HepG2 (cell line): ENCODE measurements at regions of chr12 and their contacts with region 1.

Region 1: GRCh38 chr12:104108755-104109445 is 29.1 kb downstream of the NFYB start:
- DNase-seq: peak; percentile 62
- ATAC-seq: peak; percentile 90
- H3K4me3 ChIP-seq: no peak overlapping the region
- H3K27ac ChIP-seq: no peak overlapping the region
- H3K4me1 ChIP-seq: no peaks in the 10 kb centered on the region
- H3K27me3 ChIP-seq: no peaks in the 10 kb centered on the region
- CTCF ChIP-seq: peak; percentile 87
- EP300 ChIP-seq: no peak
- POLR2A ChIP-seq: no peak
- RAD21 ChIP-seq: peak; percentile 64

Region 2: DNA sequence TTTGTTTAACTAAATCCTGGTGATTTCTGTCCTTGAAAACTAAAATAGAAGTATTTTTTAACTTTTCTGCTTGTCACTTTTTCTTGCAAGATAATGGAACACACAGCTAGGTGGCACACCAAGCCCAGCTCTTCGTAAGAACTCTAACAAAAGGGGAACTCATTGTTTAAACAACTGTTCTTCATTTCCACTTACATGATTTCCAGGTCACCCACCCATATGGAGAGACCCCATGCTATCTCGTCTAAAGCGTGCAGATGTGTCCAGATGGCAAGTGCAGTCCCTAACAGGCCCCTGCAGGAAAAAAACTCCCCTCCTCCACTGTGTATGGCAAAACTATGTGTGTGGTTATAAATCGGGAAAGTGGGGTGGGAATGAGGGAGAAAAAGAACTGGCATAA is 224.6 kb before region 1 on chr12:
- CTCF ChIA-PET with region 1: interaction called, 6 read pairs
- POLR2A ChIA-PET with region 1: no interaction called
- in situ Hi-C with region 1: loop called (anchors 5 kb)
- intact Hi-C with region 1: loop called (anchors 1 kb)
- DNase-seq: no peak
- ATAC-seq: no peak
- H3K4me3 ChIP-seq: no peak overlapping the region
- H3K27ac ChIP-seq: no peak overlapping the region
- H3K4me1 ChIP-seq: peaks cover 37% of the 10 kb centered on the region
- H3K27me3 ChIP-seq: peaks cover 0 to 4% of the 10 kb centered on the region in 2 experiments; a peak in 1 of 5 replicates
- CTCF ChIP-seq: peak; percentile 49
- EP300 ChIP-seq: no peak
- POLR2A ChIP-seq: no peak
- RAD21 ChIP-seq: no peak

Region 3: DNA sequence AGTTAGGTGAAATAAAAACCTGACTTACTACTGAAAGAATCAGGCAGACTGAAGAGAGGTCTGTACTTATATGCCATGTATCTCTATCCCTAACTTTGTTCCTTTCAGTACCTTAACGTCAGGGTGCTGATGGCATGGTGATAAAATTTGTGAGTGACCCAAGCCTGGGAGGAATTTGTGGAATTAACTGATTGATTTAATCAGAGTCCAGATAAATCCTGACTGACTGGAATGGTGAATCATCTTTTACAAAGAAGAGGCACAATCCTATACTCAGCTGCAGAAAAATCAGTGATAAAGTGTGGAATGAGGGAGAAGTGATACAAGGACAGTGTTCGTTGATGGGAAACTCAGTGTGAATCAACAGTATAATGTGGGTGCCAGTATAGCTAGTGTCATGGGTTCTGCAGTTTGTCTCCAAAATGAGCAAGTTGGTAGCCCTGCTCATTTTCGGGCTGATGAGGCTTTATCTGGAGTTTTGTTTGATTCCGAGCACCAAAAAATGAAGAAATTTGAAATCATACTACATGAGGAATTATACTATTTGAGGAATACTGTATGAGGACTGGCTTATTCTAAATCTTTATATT is 139.4 kb before region 1 on chr12:
- CTCF ChIA-PET with region 1: no interaction called
- POLR2A ChIA-PET with region 1: no interaction called
- in situ Hi-C with region 1: no loop called
- intact Hi-C with region 1: no loop called
- DNase-seq: no peak
- ATAC-seq: no peak
- H3K4me3 ChIP-seq: no peak overlapping the region
- H3K27ac ChIP-seq: no peak overlapping the region
- H3K4me1 ChIP-seq: peaks cover 41% of the 10 kb centered on the region
- H3K27me3 ChIP-seq: no peaks in the 10 kb centered on the region; a peak in 1 of 5 replicates
- CTCF ChIP-seq: no peak
- EP300 ChIP-seq: no peak
- POLR2A ChIP-seq: no peak
- RAD21 ChIP-seq: no peak

Region 4: GRCh38 chr12:104057771-104058197 is 51.1 kb before region 1 on chr12:
- CTCF ChIA-PET with region 1: interaction called, 37 read pairs
- POLR2A ChIA-PET with region 1: no interaction called
- in situ Hi-C with region 1: loop called (anchors 5 kb)
- intact Hi-C with region 1: loop called (anchors 1 kb)
- DNase-seq: no peak
- ATAC-seq: peak; percentile 56
- H3K4me3 ChIP-seq: no peak overlapping the region
- H3K27ac ChIP-seq: no peak overlapping the region
- H3K4me1 ChIP-seq: no peaks in the 10 kb centered on the region
- H3K27me3 ChIP-seq: no peaks in the 10 kb centered on the region; a peak in 1 of 5 replicates
- CTCF ChIP-seq: peak; percentile 74
- EP300 ChIP-seq: no peak
- POLR2A ChIP-seq: no peak
- RAD21 ChIP-seq: peak; percentile 35; the same call in 1 of the 2 replicates

Region 5: GRCh38 chr12:104177663-104178501 is 69.0 kb after region 1 on chr12:
- CTCF ChIA-PET with region 1: no interaction called
- POLR2A ChIA-PET with region 1: no interaction called
- in situ Hi-C with region 1: no loop called
- intact Hi-C with region 1: no loop called
- DNase-seq: peak; percentile 8
- ATAC-seq: peak; percentile 71
- H3K4me3 ChIP-seq: no peak overlapping the region
- H3K27ac ChIP-seq: no peak overlapping the region
- H3K4me1 ChIP-seq: peaks cover 8% of the 10 kb centered on the region; the same call in 1 of the 2 replicates
- H3K27me3 ChIP-seq: no peaks in the 10 kb centered on the region
- CTCF ChIP-seq: peak; percentile 36; the same call in 1 of the 2 replicates
- EP300 ChIP-seq: no peak
- POLR2A ChIP-seq: no peak
- RAD21 ChIP-seq: no peak